ENCODE measurements at regions of chr17 and their contacts with region 1.

Region 1: DNA sequence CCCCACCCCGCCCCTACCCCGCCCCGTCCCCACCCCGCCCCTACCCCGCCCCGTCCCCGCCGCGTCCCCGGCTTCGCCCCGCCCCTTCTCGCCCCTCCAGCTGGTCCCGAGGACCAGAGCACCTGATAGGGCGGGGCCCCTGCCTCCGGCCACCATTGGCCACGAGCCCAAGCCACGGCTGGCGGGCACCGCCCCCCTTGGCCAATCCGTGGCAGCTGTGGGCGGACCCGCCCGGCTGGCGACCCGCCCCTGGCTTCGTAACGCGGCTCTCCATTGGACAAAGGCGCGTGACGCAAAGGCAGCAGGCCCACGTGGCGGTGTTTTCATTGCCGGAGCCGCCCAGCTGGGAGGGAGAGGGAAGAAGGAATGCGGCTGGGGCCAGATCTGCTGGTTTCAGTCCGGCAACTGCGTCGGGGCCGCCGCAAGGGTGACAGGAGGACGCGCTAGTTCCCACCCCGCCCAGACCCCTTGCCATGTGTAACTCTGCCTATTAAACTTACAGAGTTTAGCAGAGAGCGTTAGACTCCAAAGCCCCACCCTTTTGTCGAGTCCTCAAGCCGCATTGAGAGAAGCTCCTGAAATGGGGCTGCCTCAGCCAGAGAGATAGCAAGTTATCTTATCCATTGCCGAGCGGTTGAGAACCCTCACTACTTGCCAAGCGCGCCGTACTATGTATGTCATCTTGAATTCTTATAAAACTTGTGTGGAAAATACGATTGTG is 403 bp upstream of the WIPI1 start:
- DNase-seq: peak; percentile 98 to 99
- H3K4me3 ChIP-seq: peak overlapping the region; percentile 85
- H3K27ac ChIP-seq: peak overlapping the region; percentile 96
- H3K4me1 ChIP-seq: peaks cover 32% of the 10 kb centered on the region
- H3K27me3 ChIP-seq: no peaks in the 10 kb centered on the region
- CTCF ChIP-seq: no peak
- POLR2A ChIP-seq: peak; percentile 90 to 98

Region 2: GRCh38 chr17:68172461-68172954 is 285.2 kb before region 1 on chr17:
- intact Hi-C with region 1: loop called (anchors 10 kb)
- DNase-seq: no peak
- H3K4me3 ChIP-seq: peak overlapping the region in 1 of 2 donors; percentile 12
- H3K27ac ChIP-seq: no peak overlapping the region
- H3K4me1 ChIP-seq: no peaks in the 10 kb centered on the region
- H3K27me3 ChIP-seq: no peaks in the 10 kb centered on the region
- CTCF ChIP-seq: peak; percentile 81 to 94 (median 89)
- POLR2A ChIP-seq: no peak

Region 3: GRCh38 chr17:68247445-68248198 is 210.1 kb before region 1 on chr17 and contains the start of gene AMZ2:
- intact Hi-C with region 1: loop called (anchors 5 kb)
- DNase-seq: peak in 1 of 2 donors; percentile 96
- H3K4me3 ChIP-seq: peak within 1 kb of the TSS; percentile 91 to 96
- H3K27ac ChIP-seq: peak within 1 kb of the TSS; percentile 99
- H3K4me1 ChIP-seq: peaks cover 23% of the 10 kb centered on the region
- H3K27me3 ChIP-seq: no peaks in the 10 kb centered on the region
- CTCF ChIP-seq: peak in 1 of 3 experiments; percentile 13
- POLR2A ChIP-seq: peak; percentile 87 to 91
- total RNA-seq, gene AMZ2: 39.8 TPM

Region 4: GRCh38 chr17:68260051-68260762 is 197.5 kb before region 1 on chr17:
- intact Hi-C with region 1: loop called (anchors 2 kb)
- DNase-seq: no peak
- H3K4me3 ChIP-seq: no peak overlapping the region
- H3K27ac ChIP-seq: peak overlapping the region; percentile 53
- H3K4me1 ChIP-seq: peaks cover 6% of the 10 kb centered on the region
- H3K27me3 ChIP-seq: no peaks in the 10 kb centered on the region
- CTCF ChIP-seq: no peak
- POLR2A ChIP-seq: no peak

Region 5: GRCh38 chr17:68377862-68378770 is 79.6 kb before region 1 on chr17:
- intact Hi-C with region 1: loop called (anchors 2 kb)
- DNase-seq: peak in 1 of 2 donors; percentile 99
- H3K4me3 ChIP-seq: no peak overlapping the region
- H3K27ac ChIP-seq: peak overlapping the region; percentile 93
- H3K4me1 ChIP-seq: peaks cover 37% of the 10 kb centered on the region
- H3K27me3 ChIP-seq: no peaks in the 10 kb centered on the region
- CTCF ChIP-seq: no peak
- POLR2A ChIP-seq: peak in 1 of 2 donors; percentile 18